Posterior vena cava (tissue), 2 donors: ENCODE measurements at regions of chr2 and their contacts with region 1.

Region 1: DNA sequence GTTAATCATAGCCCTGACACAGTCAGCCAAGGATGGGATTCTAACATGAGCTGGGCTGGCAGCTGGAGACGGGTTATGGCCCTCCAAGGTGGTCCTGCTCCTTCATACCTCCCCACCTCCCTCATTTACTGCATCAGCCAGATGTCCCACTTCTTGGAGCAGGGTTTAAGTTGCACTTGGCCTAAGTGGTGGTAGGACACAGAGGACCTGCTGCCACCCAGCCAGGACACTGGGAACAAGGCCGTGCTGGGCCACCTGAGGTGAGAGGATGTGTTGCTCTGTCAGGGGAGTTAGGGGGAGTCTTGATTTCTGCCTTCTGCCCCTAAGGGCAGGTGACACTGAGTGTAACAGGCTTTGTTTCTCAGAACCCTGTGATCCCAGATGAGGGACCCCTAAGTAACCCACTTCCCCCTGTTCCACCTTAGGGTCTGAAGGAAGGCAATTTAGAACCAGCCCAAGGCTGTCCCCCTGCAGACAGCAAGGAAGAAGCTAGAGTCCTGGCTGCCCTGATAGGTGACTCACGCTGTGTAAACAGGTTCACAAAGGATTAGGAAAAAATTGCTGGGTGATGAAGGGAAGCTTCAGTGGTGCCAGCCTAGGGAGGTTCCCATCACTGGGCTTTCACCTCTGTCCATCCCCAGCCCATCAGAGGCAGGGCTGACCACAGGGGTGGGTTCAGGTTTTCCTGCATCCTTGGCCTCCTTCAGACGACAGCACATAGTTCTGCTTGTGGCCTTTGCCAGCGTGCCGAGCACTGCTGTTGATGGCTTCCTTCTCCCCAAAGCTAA is 114.3 kb upstream of the MCFD2 start:
- DNase-seq: no peak

Region 2: GRCh38 chr2:46929612-46930011 is 100.3 kb before region 1 on chr2:
- intact Hi-C with region 1: no loop called
- DNase-seq: no peak

Region 3: DNA sequence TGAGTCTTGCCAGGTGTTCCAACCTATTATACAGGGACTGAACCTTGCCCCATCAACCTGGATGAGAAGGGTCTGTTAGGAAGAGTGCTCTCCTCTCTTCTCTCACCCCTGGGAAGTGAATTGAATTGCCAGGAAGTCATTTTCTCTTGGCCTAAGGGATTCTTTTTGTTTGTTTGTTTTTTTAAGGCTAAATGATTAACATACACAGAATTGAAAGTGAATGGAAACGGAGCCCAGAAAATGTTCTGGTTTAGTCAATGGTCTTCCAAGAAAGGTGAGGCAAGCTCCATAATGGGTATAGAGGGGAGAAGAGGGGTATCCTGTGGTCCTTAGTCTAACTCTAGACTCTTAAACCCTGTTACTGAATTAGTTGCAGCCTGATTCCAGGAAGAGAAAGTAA is 1935.3 kb after region 1 on chr2:
- intact Hi-C with region 1: loop called in 1 of 2 experiments (anchors 10 kb)
- DNase-seq: no peak